AG04449 (cell line): ENCODE measurements at regions of chr21 and their contacts with region 1.

Region 1: DNA sequence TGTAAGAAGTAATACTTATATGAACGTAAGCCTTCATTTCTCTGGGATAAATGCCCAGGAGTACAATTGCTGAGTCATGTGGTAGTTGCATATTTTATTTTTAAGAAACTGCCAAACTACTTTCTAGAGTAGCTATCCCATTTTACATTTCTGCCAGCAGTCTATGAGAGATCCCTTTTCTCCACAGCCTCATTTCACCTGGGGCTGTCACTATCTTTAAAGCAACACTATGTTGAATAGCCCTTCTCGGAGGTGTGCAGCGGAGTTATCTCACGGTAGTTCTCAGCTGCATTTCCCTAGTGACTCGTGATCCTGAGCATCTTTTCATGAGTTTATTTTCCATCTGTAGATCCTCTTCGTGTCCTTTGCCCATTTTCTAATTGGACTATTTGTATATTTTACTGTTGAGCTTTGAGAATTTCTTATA is 93.4 kb downstream of the ADARB1 start:
- DNase-seq: peak; percentile 29
- H3K4me3 ChIP-seq: no peak overlapping the region
- CTCF ChIP-seq: no peak

Region 2: DNA sequence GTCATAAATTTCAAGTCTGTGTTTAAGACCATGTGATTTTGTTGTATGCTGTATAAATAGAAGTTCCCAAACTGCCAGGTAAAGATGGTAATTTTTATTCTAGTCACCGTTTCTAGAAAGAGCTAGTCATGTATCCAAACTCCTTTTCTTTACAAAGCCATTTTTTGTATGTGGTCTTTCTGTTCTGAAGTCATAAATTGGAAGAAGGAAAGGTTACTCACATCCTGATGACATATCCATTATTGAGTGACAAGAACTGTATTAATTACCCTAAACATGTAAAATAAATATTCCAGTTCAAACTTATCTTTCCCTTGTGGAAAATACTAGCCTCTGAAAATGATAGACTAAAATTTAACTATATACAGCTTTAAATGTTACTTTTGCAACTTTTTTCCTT is 15.1 kb after region 1 on chr21:
- CTCF ChIA-PET with region 1: interaction called, 10 read pairs
- POLR2A ChIA-PET with region 1: no interaction called
- DNase-seq: no peak
- H3K4me3 ChIP-seq: no peak overlapping the region
- CTCF ChIP-seq: no peak